Esophagus muscularis mucosa (tissue), 4 donors: ENCODE measurements at regions of chr11 and their contacts with region 1.

Region 1: DNA sequence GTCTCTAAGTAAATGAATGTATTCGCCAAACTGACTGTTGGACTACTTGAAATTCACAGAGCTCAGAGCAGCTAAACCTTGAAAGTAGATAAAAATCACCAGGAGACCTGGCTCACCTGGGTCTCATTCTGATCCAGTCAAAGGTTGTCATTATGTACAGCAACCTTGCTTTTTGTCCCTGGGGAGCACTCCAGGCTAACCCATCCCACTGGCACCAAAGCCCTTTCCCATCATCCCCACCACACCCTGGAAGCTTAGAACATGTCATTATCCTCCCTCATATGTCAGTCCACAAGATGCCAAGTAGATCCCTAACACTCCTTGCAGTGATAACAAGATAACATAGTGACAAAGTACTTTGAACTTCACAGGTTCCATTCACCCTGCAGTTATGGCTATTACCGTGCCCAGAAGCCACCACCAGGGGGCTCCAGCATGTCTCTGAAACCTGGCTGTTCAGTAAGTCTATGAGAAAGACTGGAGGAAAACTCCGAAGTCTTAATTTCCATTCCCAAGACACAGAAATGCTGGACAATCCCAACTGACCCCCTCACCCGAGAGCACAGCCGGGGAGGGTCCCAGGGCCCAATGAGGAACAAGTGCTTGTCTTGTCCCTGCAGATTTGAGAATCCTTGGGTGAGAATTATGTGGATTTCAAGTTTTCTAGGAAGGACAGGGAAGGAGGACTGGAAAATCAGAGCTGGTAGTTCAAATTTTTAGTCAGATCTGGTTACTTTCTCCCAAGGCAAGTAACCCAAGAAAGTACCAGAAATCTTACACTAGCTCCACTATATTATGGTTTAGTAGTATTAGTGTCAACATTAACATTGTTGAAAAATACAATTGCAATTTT is 43.0 kb upstream of the USP47 start:
- DNase-seq: peak; percentile 87
- H3K4me3 ChIP-seq: no peak overlapping the region
- H3K27ac ChIP-seq: no peak overlapping the region
- H3K4me1 ChIP-seq: peaks cover 0 to 6% (median 0%) of the 10 kb centered on the region in 4 donors
- H3K27me3 ChIP-seq: no peaks in the 10 kb centered on the region
- CTCF ChIP-seq: peak; percentile 89 to 92 (median 90)
- EP300 ChIP-seq: no peak
- POLR2A ChIP-seq: no peak

Region 2: DNA sequence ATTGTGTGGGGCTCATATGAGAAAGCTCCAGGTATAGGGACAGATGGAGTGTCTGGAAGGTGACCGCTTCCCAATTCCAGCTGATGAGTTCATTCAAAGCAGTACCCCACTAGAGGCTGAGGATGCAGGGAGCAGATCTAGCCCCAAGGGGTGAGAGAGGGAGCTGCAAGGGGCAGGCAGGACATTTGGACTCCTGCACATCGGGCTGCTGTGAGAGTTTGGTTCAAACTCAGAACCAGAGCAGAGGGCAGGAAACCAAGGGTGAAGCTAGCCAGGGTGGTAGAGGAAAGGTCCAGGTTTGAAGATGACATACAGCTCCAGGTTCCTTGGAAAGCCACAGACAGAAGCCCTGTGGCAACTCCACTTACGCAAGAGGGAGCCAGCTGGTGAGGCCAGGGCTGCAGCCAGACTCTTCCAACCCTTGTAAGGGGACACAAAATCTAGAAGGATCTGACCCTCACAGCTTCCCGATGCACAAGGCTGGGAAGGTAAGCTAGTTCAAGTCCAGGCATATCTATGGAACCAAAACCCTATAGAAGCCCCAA is 447.7 kb before region 1 on chr11:
- intact Hi-C with region 1: no loop called
- DNase-seq: no peak
- H3K4me3 ChIP-seq: no peak overlapping the region
- H3K27ac ChIP-seq: no peak overlapping the region
- H3K4me1 ChIP-seq: peaks cover 5 to 46% (median 32%) of the 10 kb centered on the region in 4 donors
- H3K27me3 ChIP-seq: no peaks in the 10 kb centered on the region
- CTCF ChIP-seq: no peak
- EP300 ChIP-seq: no peak
- POLR2A ChIP-seq: no peak

Region 3: DNA sequence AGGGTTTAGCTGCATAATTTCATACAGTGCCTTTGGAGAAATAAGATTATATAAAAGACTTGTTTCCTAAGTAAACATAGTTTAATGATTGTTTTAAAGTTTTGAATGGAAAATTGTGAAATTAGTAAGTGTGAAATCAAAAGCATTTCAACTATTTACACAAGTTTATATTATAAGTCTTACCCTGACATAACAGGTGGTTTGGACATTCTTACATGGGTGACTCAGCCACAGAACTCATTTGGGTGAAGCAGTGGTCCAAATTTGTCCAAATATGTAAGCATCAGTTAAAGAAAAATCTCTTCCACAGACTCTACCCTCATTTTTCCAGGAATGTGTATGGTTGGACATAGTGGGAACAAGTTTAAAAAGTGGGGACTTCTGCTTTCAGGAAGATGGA is 110.9 kb after region 1 on chr11:
- intact Hi-C with region 1: no loop called
- DNase-seq: no peak
- H3K4me3 ChIP-seq: no peak overlapping the region
- H3K27ac ChIP-seq: peak overlapping the region; percentile 53 to 75 (median 66)
- H3K4me1 ChIP-seq: peaks cover 0 to 30% (median 20%) of the 10 kb centered on the region in 4 donors
- H3K27me3 ChIP-seq: no peaks in the 10 kb centered on the region
- CTCF ChIP-seq: no peak
- EP300 ChIP-seq: no peak
- POLR2A ChIP-seq: no peak

Region 4: GRCh38 chr11:12281571-12282478 is 483.0 kb after region 1 on chr11:
- intact Hi-C with region 1: loop called (anchors 5 kb)
- DNase-seq: peak; percentile 96
- H3K4me3 ChIP-seq: no peak overlapping the region
- H3K27ac ChIP-seq: peak overlapping the region in 1 of 4 donors; percentile 66
- H3K4me1 ChIP-seq: peaks cover 6 to 48% (median 38%) of the 10 kb centered on the region in 4 donors
- H3K27me3 ChIP-seq: no peaks in the 10 kb centered on the region
- CTCF ChIP-seq: peak in 2 of 3 experiments; percentile 99 to 100
- EP300 ChIP-seq: no peak
- POLR2A ChIP-seq: no peak